CD4-positive, alpha-beta memory T cell (primary cell): ENCODE measurements at regions of chr15 and their contacts with region 1.

Region 1: DNA sequence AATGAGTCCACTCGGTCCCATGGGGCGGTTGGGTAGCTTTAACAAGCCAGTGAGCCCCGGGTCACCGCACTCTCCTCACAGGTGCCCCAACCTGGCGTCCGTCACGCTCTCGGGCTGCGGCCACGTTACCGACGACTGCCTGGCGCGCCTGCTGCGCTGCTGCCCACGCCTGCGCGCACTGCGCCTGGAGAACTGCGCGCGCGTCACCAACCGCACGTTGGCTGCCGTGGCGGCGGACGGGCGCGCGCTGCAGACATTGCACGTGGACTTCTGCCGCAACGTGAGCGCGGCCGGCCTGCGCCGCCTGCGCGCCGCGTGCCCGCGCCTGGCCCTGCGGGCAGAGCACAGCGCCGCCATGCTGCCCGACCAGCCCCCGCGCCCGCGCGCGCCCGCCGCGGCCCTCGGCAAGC is 3.4 kb downstream of the FBXL22 start:
- DNase-seq: peak; percentile 90 to 95 (median 93)
- H3K4me3 ChIP-seq: peak overlapping the region; percentile 19 to 70
- H3K4me3 Mint-ChIP-seq: peak overlapping the region; percentile 92 to 98 (median 95)
- H3K27ac ChIP-seq: peak overlapping the region; percentile 69
- H3K27ac Mint-ChIP-seq: peak overlapping the region; percentile 94 to 97 (median 96)
- H3K4me1 ChIP-seq: peaks cover 39% of the 10 kb centered on the region
- H3K4me1 Mint-ChIP-seq: peaks cover 26 to 84% (median 47%) of the 10 kb centered on the region in 4 donors
- H3K27me3 ChIP-seq: no peaks in the 10 kb centered on the region
- H3K27me3 Mint-ChIP-seq: no peaks in the 10 kb centered on the region

Region 2: DNA sequence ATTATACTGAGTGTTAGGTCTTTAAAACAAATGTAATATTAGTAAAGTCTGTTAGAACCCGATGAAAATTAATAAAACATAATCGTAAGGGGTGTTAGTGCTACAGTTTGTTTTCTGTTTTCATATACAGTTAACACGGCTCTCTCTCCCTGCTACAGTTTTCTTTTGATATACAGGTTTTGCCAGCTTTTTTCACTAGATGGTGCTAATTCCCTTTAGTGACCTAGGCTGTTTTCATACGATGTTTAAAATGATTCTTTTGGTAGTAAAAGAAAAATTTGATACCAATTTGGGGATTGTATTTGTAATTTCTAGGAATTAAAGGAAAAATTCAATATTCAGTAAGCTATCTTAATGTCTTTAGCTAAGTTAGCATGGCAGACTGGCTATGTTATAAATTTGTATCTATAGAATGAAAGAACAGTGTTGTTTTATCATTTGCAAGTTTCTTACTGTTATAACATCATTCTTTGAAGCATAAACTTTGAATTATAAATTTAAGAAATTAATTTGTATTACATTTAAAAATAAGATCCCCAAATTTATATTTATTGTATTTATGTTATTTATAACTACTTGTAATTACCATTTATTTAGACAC is 311.7 kb before region 1 on chr15:
- CTCF ChIA-PET with region 1: no interaction called
- POLR2A ChIA-PET with region 1: no interaction called
- intact Hi-C with region 1: loop called (anchors 5 kb)
- DNase-seq: peak in 4 of 5 donors; percentile 45 to 55 (median 48)
- H3K4me3 ChIP-seq: no peak overlapping the region
- H3K4me3 Mint-ChIP-seq: no peak overlapping the region
- H3K27ac ChIP-seq: no peak overlapping the region
- H3K27ac Mint-ChIP-seq: peak overlapping the region in 6 of 7 donors; percentile 1 to 81 (median 34)
- H3K4me1 ChIP-seq: peaks cover 7% of the 10 kb centered on the region
- H3K4me1 Mint-ChIP-seq: peaks cover 6 to 8% (median 7%) of the 10 kb centered on the region in 4 donors
- H3K27me3 ChIP-seq: no peaks in the 10 kb centered on the region
- H3K27me3 Mint-ChIP-seq: no peaks in the 10 kb centered on the region

Region 3: GRCh38 chr15:63481105-63481810 is 119.4 kb before region 1 on chr15:
- CTCF ChIA-PET with region 1: interaction called, 10 read pairs
- POLR2A ChIA-PET with region 1: interaction called, 34 read pairs
- intact Hi-C with region 1: loop called (anchors 1 kb)
- DNase-seq: peak in 1 of 5 donors; percentile 60
- H3K4me3 ChIP-seq: no peak overlapping the region
- H3K4me3 Mint-ChIP-seq: peak overlapping the region in 6 of 8 donors; percentile 31 to 84 (median 78)
- H3K27ac ChIP-seq: peak overlapping the region; percentile 81
- H3K27ac Mint-ChIP-seq: peak overlapping the region; percentile 92 to 100 (median 100)
- H3K4me1 ChIP-seq: peaks cover 97% of the 10 kb centered on the region
- H3K4me1 Mint-ChIP-seq: peaks cover 52 to 85% (median 70%) of the 10 kb centered on the region in 4 donors
- H3K27me3 ChIP-seq: no peaks in the 10 kb centered on the region
- H3K27me3 Mint-ChIP-seq: no peaks in the 10 kb centered on the region

Region 4: DNA sequence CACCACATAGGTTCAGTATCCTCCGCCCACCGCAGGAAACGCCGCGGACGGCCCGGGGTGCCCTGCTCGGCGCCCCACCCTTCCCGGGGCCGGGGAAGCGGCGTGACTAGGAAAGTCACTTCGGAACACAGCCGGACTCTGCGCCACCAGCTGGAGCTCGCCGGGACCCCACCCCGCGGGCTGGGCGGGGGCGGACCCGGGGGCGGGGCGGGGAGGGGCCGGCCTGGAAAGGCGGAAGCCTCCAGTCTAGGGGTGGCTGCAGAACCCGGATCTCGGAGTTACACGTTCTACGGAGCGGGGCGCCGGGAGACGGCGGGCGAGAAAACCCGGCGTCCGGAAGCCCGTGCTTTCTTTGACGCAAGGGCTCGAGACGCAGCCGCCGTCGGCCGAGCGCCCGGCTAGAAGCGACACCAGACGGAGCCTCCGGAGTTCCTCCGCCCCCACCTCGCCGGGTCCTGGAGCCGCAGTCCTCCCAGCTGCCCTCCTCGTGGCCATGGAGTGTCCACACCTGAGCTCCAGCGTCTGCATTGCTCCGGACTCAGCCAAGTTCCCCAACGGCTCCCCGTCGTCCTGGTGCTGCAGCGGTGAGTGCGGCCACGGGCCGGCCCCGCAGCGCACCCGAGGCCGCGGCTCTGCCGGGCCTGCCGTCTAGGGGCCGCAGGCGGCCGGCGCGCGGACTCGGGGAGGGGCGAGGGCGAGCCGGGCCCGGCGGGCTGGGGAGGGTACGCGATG is 96.2 kb before region 1 on chr15 and contains the start of gene USP3:
- CTCF ChIA-PET with region 1: interaction called, 15 read pairs
- POLR2A ChIA-PET with region 1: interaction called, 135 read pairs
- intact Hi-C with region 1: loop called (anchors 1 kb)
- DNase-seq: peak; percentile 92 to 95 (median 94)
- H3K4me3 ChIP-seq: peak within 1 kb of the TSS; percentile 63 to 83
- H3K4me3 Mint-ChIP-seq: peak within 1 kb of the TSS; percentile 90 to 98 (median 97)
- H3K27ac ChIP-seq: peak within 1 kb of the TSS; percentile 98
- H3K27ac Mint-ChIP-seq: peak within 1 kb of the TSS; percentile 93 to 100 (median 99)
- H3K4me1 ChIP-seq: peaks cover 81% of the 10 kb centered on the region
- H3K4me1 Mint-ChIP-seq: peaks cover 61 to 84% (median 68%) of the 10 kb centered on the region in 4 donors
- H3K27me3 ChIP-seq: no peaks in the 10 kb centered on the region
- H3K27me3 Mint-ChIP-seq: no peaks in the 10 kb centered on the region
- total RNA-seq, gene USP3: 148 to 159 TPM

Region 5: DNA sequence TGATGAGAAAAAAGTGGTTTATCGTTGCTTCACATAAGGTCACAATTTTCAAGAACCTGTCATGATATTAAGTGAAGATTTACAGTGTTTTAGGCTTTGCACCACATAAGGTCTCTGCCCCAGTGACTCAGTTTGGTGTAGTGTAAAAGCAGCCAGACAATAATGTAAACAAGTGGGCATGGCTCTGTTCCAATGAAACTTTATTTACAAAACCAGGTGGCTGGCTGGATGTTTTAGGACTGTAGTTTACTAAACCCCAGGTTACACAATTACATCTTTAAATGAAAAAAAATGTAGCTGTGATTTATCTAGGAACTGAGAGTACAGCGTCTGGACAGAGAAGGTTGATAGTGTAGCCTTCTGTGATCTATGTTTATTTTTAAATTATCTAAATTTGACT is 13.1 kb before region 1 on chr15:
- CTCF ChIA-PET with region 1: interaction called, 8 read pairs
- POLR2A ChIA-PET with region 1: interaction called, 19 read pairs
- intact Hi-C with region 1: no loop called
- DNase-seq: no peak
- H3K4me3 ChIP-seq: no peak overlapping the region
- H3K4me3 Mint-ChIP-seq: no peak overlapping the region
- H3K27ac ChIP-seq: no peak overlapping the region
- H3K27ac Mint-ChIP-seq: peak overlapping the region in 1 of 7 donors; percentile 7
- H3K4me1 ChIP-seq: peaks cover 5% of the 10 kb centered on the region
- H3K4me1 Mint-ChIP-seq: peaks cover 15 to 32% (median 26%) of the 10 kb centered on the region in 4 donors
- H3K27me3 ChIP-seq: no peaks in the 10 kb centered on the region
- H3K27me3 Mint-ChIP-seq: no peaks in the 10 kb centered on the region

Region 6: GRCh38 chr15:63945007-63945788 is 344.6 kb after region 1 on chr15:
- CTCF ChIA-PET with region 1: no interaction called
- POLR2A ChIA-PET with region 1: no interaction called
- intact Hi-C with region 1: no loop called
- DNase-seq: peak; percentile 50 to 66 (median 56)
- H3K4me3 ChIP-seq: no peak overlapping the region
- H3K4me3 Mint-ChIP-seq: peak overlapping the region in 3 of 8 donors; percentile 4 to 57 (median 14)
- H3K27ac ChIP-seq: no peak overlapping the region
- H3K27ac Mint-ChIP-seq: peak overlapping the region in 5 of 7 donors; percentile 30 to 85 (median 61)
- H3K4me1 ChIP-seq: peaks cover 9% of the 10 kb centered on the region
- H3K4me1 Mint-ChIP-seq: peaks cover 6 to 20% (median 10%) of the 10 kb centered on the region in 4 donors
- H3K27me3 ChIP-seq: no peaks in the 10 kb centered on the region
- H3K27me3 Mint-ChIP-seq: no peaks in the 10 kb centered on the region

Region 7: GRCh38 chr15:64093627-64094417 is 493.2 kb after region 1 on chr15 and contains the start of gene CIAO2A:
- CTCF ChIA-PET with region 1: interaction called, 3 read pairs
- POLR2A ChIA-PET with region 1: interaction called, 5 read pairs
- intact Hi-C with region 1: loop called (anchors 10 kb)
- DNase-seq: peak; percentile 86 to 96 (median 90)
- H3K4me3 ChIP-seq: peak within 1 kb of the TSS; percentile 87 to 98
- H3K4me3 Mint-ChIP-seq: peak within 1 kb of the TSS; percentile 92 to 99 (median 98)
- H3K27ac ChIP-seq: peak within 1 kb of the TSS; percentile 85
- H3K27ac Mint-ChIP-seq: peak within 1 kb of the TSS; percentile 90 to 100 (median 98)
- H3K4me1 ChIP-seq: peaks cover 65% of the 10 kb centered on the region
- H3K4me1 Mint-ChIP-seq: peaks cover 55 to 86% (median 69%) of the 10 kb centered on the region in 4 donors
- H3K27me3 ChIP-seq: no peaks in the 10 kb centered on the region
- H3K27me3 Mint-ChIP-seq: no peaks in the 10 kb centered on the region
- total RNA-seq, gene CIAO2A: 35.0 to 36.4 TPM